ENCODE measurements at regions of chr1 and their contacts with region 1.

Region 1: GRCh38 chr1:24385160-24385940 is 28.2 kb downstream of the STPG1 start:
- DNase-seq: peak; percentile 49
- ATAC-seq: no peak
- H3K4me3 ChIP-seq: no peak overlapping the region
- H3K27ac ChIP-seq: no peak overlapping the region
- H3K4me1 ChIP-seq: peaks cover 12% of the 10 kb centered on the region
- H3K27me3 ChIP-seq: no peaks in the 10 kb centered on the region
- CTCF ChIP-seq: peak; percentile 59
- POLR2A ChIP-seq: no peak
- RAD21 ChIP-seq: peak; percentile 5; the same call in 1 of the 2 replicates

Region 2: GRCh38 chr1:24157918-24158481 is 227.3 kb before region 1 on chr1:
- CTCF ChIA-PET with region 1: no interaction called
- POLR2A ChIA-PET with region 1: no interaction called
- dilution Hi-C with region 1: no loop called
- in situ Hi-C with region 1: no loop called
- intact Hi-C with region 1: no loop called
- DNase-seq: no peak
- ATAC-seq: peak; percentile 62
- H3K4me3 ChIP-seq: no peak overlapping the region
- H3K27ac ChIP-seq: no peak overlapping the region
- H3K4me1 ChIP-seq: no peaks in the 10 kb centered on the region
- H3K27me3 ChIP-seq: peaks cover 67% of the 10 kb centered on the region
- CTCF ChIP-seq: peak; percentile 21; the same call in 1 of the 2 replicates
- POLR2A ChIP-seq: no peak
- RAD21 ChIP-seq: no peak

Region 3: GRCh38 chr1:24289937-24290595 is 95.3 kb before region 1 on chr1:
- CTCF ChIA-PET with region 1: no interaction called
- POLR2A ChIA-PET with region 1: no interaction called
- dilution Hi-C with region 1: no loop called
- in situ Hi-C with region 1: no loop called
- intact Hi-C with region 1: loop called (anchors 10 kb)
- DNase-seq: peak; percentile 81
- ATAC-seq: peak; percentile 32
- H3K4me3 ChIP-seq: no peak overlapping the region
- H3K27ac ChIP-seq: no peak overlapping the region
- H3K4me1 ChIP-seq: peaks cover 11% of the 10 kb centered on the region
- H3K27me3 ChIP-seq: peaks cover 2% of the 10 kb centered on the region; the same call in 1 of the 2 replicates
- CTCF ChIP-seq: no peak
- POLR2A ChIP-seq: no peak
- RAD21 ChIP-seq: no peak

Region 4: DNA sequence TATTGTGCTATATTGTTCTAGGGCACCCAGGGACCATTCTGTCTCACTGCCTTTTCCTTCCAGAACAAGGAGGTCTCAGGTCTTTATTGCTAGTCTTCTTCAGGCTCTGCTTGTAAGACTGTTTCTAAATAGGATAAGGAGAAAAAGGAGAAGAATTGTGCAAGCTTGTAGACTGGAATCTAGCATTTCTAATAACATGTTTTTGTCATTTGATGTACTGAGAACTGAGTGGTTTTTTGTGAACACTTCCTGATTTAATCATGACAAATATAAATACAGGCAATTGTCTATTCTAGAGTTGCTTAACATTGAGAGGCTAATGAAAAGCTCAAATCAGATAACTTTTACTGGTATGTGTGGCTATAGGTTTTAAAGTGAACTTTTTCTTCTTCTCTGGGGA is 437.5 kb after region 1 on chr1:
- CTCF ChIA-PET with region 1: no interaction called
- POLR2A ChIA-PET with region 1: no interaction called
- dilution Hi-C with region 1: no loop called
- in situ Hi-C with region 1: no loop called
- intact Hi-C with region 1: no loop called
- DNase-seq: no peak
- ATAC-seq: no peak
- H3K4me3 ChIP-seq: no peak overlapping the region
- H3K27ac ChIP-seq: no peak overlapping the region
- H3K4me1 ChIP-seq: peaks cover 14% of the 10 kb centered on the region
- H3K27me3 ChIP-seq: no peaks in the 10 kb centered on the region
- CTCF ChIP-seq: no peak
- POLR2A ChIP-seq: no peak
- RAD21 ChIP-seq: no peak

Measured in IMR-90 (cell line).